Natural killer cell (primary cell): ENCODE measurements at regions of chrX and their contacts with region 1.

Region 1: DNA sequence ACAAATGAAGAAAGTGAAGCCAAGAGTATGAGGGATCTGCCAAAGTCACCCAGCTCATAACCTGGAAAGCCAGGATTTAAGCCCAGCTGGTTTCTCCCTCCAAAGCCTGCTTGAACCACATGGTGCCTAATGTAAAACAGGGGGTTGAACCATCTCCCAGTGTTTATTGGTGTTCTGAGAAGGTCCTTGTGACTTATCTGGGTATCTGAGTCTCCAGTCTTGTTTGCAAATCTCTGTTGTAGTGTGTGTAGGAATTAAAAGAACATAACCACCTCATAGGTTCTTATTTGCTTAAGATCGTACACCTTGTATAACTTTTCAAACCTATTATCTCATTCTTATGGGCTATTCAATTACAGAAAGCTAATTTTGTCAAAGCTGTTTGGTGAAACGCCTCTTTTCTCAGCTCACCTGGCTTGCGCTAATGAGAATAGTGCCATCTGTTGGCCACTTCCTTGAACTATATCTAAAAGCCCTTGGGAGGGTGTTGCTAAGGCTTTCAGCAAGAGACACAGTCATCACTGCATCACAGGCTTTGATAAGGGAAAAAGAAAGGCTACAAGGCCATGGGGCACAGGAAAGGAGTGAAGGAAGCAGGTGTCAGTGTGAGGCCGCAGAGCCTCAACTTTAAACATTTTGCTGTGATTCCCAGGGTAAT is 34.0 kb downstream of the ETDB start:
- DNase-seq: peak in 1 of 2 donors; percentile 80
- ATAC-seq: peak; percentile 84 to 99 (median 99)
- H3K4me3 ChIP-seq: no peak overlapping the region
- H3K4me3 Mint-ChIP-seq: no peak overlapping the region
- H3K27ac ChIP-seq: no peak overlapping the region
- H3K27ac Mint-ChIP-seq: peak overlapping the region in 1 of 2 donors; percentile 55
- H3K4me1 ChIP-seq: no peaks in the 10 kb centered on the region
- H3K4me1 Mint-ChIP-seq: peaks cover 6 to 7% of the 10 kb centered on the region in 2 donors
- H3K27me3 ChIP-seq: no peaks in the 10 kb centered on the region
- H3K27me3 Mint-ChIP-seq: peaks cover 0 to 25% of the 10 kb centered on the region in 2 donors
- CTCF ChIP-seq: peak; percentile 51

Region 2: GRCh38 chrX:134969726-134970125 is 116.6 kb before region 1 on chrX:
- intact Hi-C with region 1: loop called (anchors 1 kb)
- DNase-seq: no peak
- ATAC-seq: no peak
- H3K4me3 ChIP-seq: no peak overlapping the region
- H3K4me3 Mint-ChIP-seq: no peak overlapping the region
- H3K27ac ChIP-seq: no peak overlapping the region
- H3K27ac Mint-ChIP-seq: no peak overlapping the region
- H3K4me1 ChIP-seq: peaks cover 3% of the 10 kb centered on the region
- H3K4me1 Mint-ChIP-seq: no peaks in the 10 kb centered on the region
- H3K27me3 ChIP-seq: no peaks in the 10 kb centered on the region
- H3K27me3 Mint-ChIP-seq: peaks cover 0 to 4% of the 10 kb centered on the region in 2 donors
- CTCF ChIP-seq: no peak